PC-9 (cell line): ENCODE measurements at regions of chr2 and their contacts with region 1.

Region 1: GRCh38 chr2:156199588-156199987 is 132.9 kb downstream of the NR4A2 start:
- DNase-seq: peak in 1 of 2 experiments; percentile 93
- H3K4me3 ChIP-seq: no peak overlapping the region
- H3K27ac ChIP-seq: peak overlapping the region; percentile 83
- H3K4me1 ChIP-seq: peaks cover 27% of the 10 kb centered on the region
- H3K27me3 ChIP-seq: no peaks in the 10 kb centered on the region
- CTCF ChIP-seq: no peak

Region 2: DNA sequence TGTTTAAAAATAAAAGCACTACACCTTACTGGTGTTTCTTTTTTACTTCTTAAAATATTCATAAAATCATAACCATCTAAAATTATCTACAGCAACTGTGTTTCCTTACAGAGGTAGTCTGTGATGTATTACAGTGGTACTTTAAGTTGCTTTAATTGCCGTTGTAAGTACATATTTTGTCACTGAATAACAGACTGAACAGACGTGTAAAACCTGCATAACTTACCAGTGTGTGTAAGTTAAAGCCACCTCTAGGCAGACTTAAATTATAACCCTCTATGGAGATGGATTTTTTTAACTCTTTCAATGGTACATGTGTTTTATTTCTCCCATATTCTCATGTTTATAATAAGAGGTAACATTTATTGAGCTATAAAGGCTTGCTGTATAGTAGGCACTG is 33.8 kb before region 1 on chr2:
- CTCF ChIA-PET with region 1: no interaction called
- POLR2A ChIA-PET with region 1: no interaction called
- intact Hi-C with region 1: no loop called
- DNase-seq: no peak
- H3K4me3 ChIP-seq: no peak overlapping the region
- H3K27ac ChIP-seq: no peak overlapping the region
- H3K4me1 ChIP-seq: no peaks in the 10 kb centered on the region
- H3K27me3 ChIP-seq: no peaks in the 10 kb centered on the region
- CTCF ChIP-seq: no peak

Region 3: DNA sequence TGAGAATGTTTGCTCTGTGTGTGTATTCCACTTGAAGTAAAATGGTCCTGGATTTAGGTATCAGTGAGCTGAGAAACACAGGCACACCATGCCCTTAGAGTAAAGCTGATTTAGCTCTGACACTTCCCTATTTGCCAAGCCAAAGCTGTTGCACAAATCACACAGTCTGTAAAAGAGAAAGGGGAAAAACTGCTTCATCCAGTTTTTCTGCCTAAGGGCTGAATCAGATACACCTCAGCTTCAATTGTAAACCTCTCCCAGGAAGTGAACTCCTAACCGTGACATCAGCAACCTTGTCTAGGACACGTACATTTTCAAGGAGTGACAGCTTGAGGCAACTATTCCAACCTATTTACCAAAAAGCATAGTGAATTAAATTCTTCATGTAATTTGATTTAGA is 17.4 kb before region 1 on chr2:
- CTCF ChIA-PET with region 1: no interaction called
- POLR2A ChIA-PET with region 1: no interaction called
- intact Hi-C with region 1: loop called (anchors 1 kb)
- DNase-seq: peak; percentile 52 to 96
- H3K4me3 ChIP-seq: peak overlapping the region; percentile 29; the same call in 1 of the 2 replicates
- H3K27ac ChIP-seq: peak overlapping the region; percentile 96
- H3K4me1 ChIP-seq: peaks cover 36% of the 10 kb centered on the region
- H3K27me3 ChIP-seq: no peaks in the 10 kb centered on the region
- CTCF ChIP-seq: no peak

Region 4: DNA sequence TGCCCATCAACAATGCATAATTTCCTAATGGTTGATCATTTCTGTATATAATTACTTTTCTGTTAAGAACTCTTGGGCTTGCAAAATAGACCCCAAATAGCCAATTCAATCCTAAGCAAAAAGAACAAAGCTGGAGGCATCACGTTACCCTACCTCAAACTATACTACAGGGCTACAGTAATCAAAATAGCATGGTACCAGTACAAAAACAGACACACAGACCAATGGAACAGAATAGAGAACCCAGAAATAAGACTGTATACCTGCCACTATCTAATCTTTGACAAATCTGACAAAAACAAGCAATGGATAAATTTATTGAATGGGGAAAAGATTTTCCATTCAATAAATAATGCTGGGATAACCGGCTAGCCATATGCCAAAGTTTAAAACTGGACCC is 54.2 kb after region 1 on chr2:
- CTCF ChIA-PET with region 1: no interaction called
- POLR2A ChIA-PET with region 1: no interaction called
- intact Hi-C with region 1: loop called (anchors 5 kb)
- DNase-seq: no peak
- H3K4me3 ChIP-seq: peak overlapping the region; percentile 70
- H3K27ac ChIP-seq: no peak overlapping the region; the same call in 1 of the 2 replicates
- H3K4me1 ChIP-seq: no peaks in the 10 kb centered on the region
- H3K27me3 ChIP-seq: no peaks in the 10 kb centered on the region
- CTCF ChIP-seq: no peak